K562 (cell line): ENCODE measurements at regions of chr12 and their contacts with region 1.

Region 1: DNA sequence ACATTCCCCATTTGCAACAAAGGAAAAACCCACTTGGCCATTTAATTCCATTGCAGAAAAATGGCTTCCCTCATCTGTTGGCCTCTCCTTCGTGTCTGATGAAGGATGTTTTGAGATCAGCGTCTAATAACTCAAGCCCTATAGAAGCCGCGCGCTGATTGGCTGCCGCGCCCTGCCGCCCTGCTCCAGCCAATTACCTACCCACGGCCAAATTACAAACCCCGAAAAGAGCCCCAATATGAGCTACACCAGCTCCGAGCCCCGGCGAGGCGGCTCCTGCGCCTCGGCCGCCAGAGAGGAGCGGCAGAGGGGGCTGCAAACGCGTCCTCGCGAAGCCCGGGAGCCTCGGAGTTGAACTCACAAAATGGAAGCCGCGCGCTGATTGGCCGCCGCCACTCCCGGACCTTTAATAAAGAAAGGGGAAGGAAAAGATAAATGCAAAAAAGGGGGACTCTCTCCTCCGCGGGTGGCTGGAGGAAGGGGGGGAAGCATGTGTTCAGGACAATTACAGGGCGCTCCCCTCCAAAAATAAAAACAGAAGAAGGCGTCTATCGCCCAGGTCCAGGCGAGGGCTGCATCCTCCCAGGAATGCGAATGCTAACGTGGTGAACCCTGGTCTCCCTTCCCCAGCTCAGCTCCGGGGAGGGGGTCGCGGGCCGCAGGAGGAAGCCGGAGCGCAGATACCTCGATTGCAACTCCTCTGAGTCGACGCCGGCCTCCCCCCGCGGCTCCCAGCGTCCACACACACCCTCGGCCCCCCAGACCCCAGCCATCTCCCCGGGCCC is 771 bp upstream of the SETD1B start:
- DNase-seq: peak; percentile 70 to 96 (median 84)
- ATAC-seq: peak; percentile 30
- H3K4me3 ChIP-seq: peak overlapping the region; percentile 80
- H3K27ac ChIP-seq: peak overlapping the region; percentile 99
- H3K4me1 ChIP-seq: peaks cover 21 to 64% of the 10 kb centered on the region in 2 experiments; a peak in 4 of 5 replicates
- H3K27me3 ChIP-seq: no peaks in the 10 kb centered on the region
- CTCF ChIP-seq: no peak
- EP300 ChIP-seq: no peak
- POLR2A ChIP-seq: peak; percentile 97
- RAD21 ChIP-seq: no peak

Region 2: DNA sequence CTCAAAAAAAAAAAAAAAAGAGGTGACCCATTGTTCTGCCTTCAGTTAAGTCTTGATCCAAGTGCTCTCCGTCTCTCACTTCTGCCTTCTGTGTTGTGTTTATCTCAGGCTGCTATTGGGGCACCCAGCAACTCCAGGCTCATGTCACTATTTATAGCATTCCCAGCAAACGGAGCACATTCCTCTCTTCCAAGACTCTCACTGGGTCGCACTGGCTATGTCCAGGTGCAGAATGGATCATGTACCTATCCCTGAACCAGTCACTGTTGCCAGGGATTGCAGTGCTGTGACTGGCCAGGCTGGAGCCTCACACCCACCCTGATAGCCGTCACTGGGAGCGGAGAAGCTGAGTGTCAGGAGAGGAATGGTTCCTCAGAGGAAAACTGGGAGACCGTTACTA is 40.8 kb before region 1 on chr12:
- CTCF ChIA-PET with region 1: no interaction called
- POLR2A ChIA-PET with region 1: no interaction called
- in situ Hi-C with region 1: no loop called
- intact Hi-C with region 1: no loop called
- DNase-seq: no peak
- ATAC-seq: no peak
- H3K4me3 ChIP-seq: no peak overlapping the region
- H3K27ac ChIP-seq: no peak overlapping the region
- H3K4me1 ChIP-seq: peaks cover 4 to 18% of the 10 kb centered on the region in 2 experiments; a peak in 3 of 5 replicates
- H3K27me3 ChIP-seq: no peaks in the 10 kb centered on the region
- CTCF ChIP-seq: no peak
- EP300 ChIP-seq: no peak
- POLR2A ChIP-seq: no peak
- RAD21 ChIP-seq: no peak

Region 3: DNA sequence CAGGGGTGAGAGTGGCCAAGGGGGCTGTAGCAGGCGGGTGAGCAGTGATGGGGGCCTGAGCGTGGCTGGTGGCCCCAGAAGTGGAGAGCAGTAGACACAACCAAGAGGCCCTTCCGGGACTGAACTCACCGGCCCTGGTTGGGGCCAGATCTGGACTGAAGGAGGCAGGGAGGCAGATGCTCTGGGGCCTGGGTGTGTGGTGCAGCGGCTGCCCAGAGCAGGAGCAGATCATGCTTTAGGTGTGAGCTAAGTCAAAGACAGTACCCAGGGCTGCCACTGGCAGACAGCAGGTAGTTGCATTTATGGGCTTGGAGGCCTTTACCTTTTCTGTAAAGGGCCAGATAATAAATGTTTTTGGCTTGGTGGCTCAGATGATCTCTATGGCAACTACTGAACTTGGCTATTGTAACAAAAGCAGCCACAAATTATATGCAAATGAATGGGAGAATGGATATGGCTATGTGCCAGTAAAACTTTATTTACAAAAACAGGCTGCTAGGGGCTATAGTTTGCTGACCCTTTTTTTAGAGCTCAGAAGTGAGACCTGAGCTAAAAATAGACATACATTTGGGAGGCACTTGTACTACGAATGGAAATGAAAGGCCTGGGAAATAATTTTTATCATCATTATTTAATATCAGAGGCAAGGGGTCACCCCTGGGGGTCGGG is 26.3 kb after region 1 on chr12:
- CTCF ChIA-PET with region 1: no interaction called
- POLR2A ChIA-PET with region 1: interaction called, 12 read pairs
- in situ Hi-C with region 1: no loop called
- intact Hi-C with region 1: no loop called
- DNase-seq: no peak
- ATAC-seq: no peak
- H3K4me3 ChIP-seq: no peak overlapping the region
- H3K27ac ChIP-seq: no peak overlapping the region
- H3K4me1 ChIP-seq: peaks cover 0 to 25% of the 10 kb centered on the region in 2 experiments; a peak in 2 of 5 replicates
- H3K27me3 ChIP-seq: no peaks in the 10 kb centered on the region
- CTCF ChIP-seq: no peak
- EP300 ChIP-seq: no peak
- POLR2A ChIP-seq: no peak
- RAD21 ChIP-seq: no peak

Region 4: DNA sequence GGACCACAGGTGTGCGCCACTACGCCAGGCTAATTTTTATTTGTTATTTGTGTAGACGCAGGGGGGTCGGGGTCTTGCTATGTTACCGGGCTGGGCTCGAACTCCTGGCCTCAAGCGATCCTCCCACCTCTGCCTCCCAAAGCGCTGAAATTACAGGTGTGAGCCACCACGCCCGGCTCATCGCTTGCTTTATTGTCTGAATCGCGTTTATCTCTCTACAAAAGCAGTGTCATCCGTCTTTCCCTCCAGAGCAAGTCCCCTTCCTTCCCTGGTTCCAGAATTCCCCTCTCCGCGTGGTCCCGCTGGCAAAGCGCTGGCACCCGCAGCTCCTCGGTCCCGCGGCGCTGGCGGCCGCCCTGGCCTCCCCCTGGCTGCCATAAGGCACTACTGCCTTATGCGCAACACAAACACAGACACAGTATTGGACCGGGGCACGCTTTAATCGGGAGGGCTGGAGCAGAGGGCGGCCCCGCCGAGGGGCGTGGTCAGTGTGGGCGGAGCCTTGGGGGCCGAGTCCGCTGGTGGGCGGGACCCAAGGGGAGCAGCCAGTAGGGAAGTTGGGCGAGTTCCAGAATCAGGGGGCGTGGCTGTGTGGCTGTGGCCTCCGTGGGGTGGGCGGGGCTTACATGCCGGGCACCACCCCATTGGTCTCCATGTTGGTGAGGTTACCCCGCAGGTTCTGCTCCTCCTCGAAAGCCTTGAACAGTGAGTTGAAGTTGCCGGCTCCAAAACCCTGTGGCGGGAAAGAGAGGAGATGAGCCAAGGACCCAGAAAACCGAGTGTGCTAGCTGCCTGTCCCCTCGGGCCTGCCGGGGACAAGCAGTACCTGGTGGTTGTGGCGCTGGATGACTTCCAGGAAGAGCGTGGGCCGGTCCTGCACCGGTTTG is 36.3 kb after region 1 on chr12:
- CTCF ChIA-PET with region 1: no interaction called
- POLR2A ChIA-PET with region 1: interaction called, 12 read pairs
- in situ Hi-C with region 1: no loop called
- intact Hi-C with region 1: no loop called
- DNase-seq: peak; percentile 99 to 100 (median 100)
- ATAC-seq: peak; percentile 97
- H3K4me3 ChIP-seq: peak overlapping the region; percentile 75
- H3K27ac ChIP-seq: peak overlapping the region; percentile 89
- H3K4me1 ChIP-seq: peaks cover 18 to 30% of the 10 kb centered on the region in 2 experiments
- H3K27me3 ChIP-seq: no peaks in the 10 kb centered on the region
- CTCF ChIP-seq: peak; percentile 58 to 77 (median 63); a peak in 5 of 6 replicates
- EP300 ChIP-seq: no peak
- POLR2A ChIP-seq: peak; percentile 91
- RAD21 ChIP-seq: no peak; a peak in 2 of 4 replicates